Heart right ventricle (tissue), 16 donors: ENCODE measurements at regions of chr1 and their contacts with region 1.

Region 1: GRCh38 chr1:40404670-40405462 is 31.3 kb downstream of the SMAP2 start:
- DNase-seq: peak in 1 of 2 donors; percentile 27
- ATAC-seq: peak in 4 of 8 donors; percentile 38 to 63 (median 53)
- H3K4me3 ChIP-seq: no peak overlapping the region
- H3K27ac ChIP-seq: peak overlapping the region in 2 of 10 donors; percentile 37 to 55
- H3K4me1 ChIP-seq: peaks cover 0 to 49% (median 6%) of the 10 kb centered on the region in 9 donors
- H3K27me3 ChIP-seq: no peaks in the 10 kb centered on the region
- CTCF ChIP-seq: peak; percentile 68 to 95 (median 86)

Region 2: GRCh38 chr1:40079774-40080400 is 325.0 kb before region 1 on chr1:
- intact Hi-C with region 1: loop called in 3 of 10 experiments (anchors 5 kb)
- DNase-seq: no peak
- ATAC-seq: peak in 1 of 8 donors; percentile 30
- H3K4me3 ChIP-seq: no peak overlapping the region
- H3K27ac ChIP-seq: peak overlapping the region in 1 of 10 donors; percentile 69
- H3K4me1 ChIP-seq: peaks cover 0 to 79% (median 0%) of the 10 kb centered on the region in 9 donors
- H3K27me3 ChIP-seq: no peaks in the 10 kb centered on the region
- CTCF ChIP-seq: no peak

Region 3: DNA sequence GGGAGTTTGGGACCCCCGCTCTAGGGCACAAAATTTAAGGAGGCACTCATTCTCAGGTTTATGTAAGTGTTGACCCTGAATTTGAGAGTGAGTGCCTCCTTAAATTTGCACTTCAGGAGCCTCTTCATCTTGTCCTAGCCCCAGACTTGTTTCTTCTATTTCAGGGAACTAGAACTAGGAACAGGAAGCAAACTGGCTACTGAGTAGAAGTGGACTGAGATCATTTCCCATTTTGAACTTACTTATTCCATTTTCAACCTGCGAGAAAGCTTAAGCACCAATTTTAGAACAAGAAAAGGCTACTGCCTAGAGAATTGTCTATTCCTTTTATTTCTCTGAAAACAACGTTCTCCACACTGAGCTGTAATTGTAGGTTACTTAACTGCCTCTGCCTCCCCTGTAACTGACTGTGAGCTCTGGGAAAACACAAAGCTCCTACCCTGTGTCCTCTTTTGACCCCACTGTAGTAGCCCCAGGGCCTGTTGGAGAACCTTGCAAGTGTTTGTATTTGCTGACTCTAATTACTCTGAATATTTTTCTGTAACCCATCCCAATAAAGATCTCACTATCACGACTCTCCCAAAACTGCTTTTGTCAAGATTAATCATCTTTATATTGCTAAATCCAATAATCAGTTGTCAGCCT is 310.3 kb before region 1 on chr1:
- intact Hi-C with region 1: loop called in 1 of 10 experiments (anchors 5 kb)
- DNase-seq: no peak
- ATAC-seq: peak in 3 of 8 donors; percentile 16 to 17 (median 16)
- H3K4me3 ChIP-seq: no peak overlapping the region
- H3K27ac ChIP-seq: peak overlapping the region in 4 of 10 donors; percentile 20 to 66 (median 28)
- H3K4me1 ChIP-seq: peaks cover 2 to 43% (median 14%) of the 10 kb centered on the region in 9 donors
- H3K27me3 ChIP-seq: no peaks in the 10 kb centered on the region
- CTCF ChIP-seq: no peak

Region 4: GRCh38 chr1:40143891-40144575 is 260.8 kb before region 1 on chr1:
- intact Hi-C with region 1: loop called in 8 of 10 experiments (anchors 2 to 5 kb)
- DNase-seq: peak in 1 of 2 donors; percentile 57
- ATAC-seq: peak in 7 of 8 donors; percentile 58 to 81 (median 75)
- H3K4me3 ChIP-seq: no peak overlapping the region
- H3K27ac ChIP-seq: no peak overlapping the region
- H3K4me1 ChIP-seq: peaks cover 0 to 8% (median 0%) of the 10 kb centered on the region in 9 donors
- H3K27me3 ChIP-seq: peaks cover 0 to 62% (median 38%) of the 10 kb centered on the region in 7 donors
- CTCF ChIP-seq: peak; percentile 59 to 85 (median 82)

Region 5: GRCh38 chr1:40153073-40153770 is 251.6 kb before region 1 on chr1:
- intact Hi-C with region 1: loop called in 4 of 10 experiments (anchors 5 kb)
- DNase-seq: peak in 1 of 2 donors; percentile 22
- ATAC-seq: no peak
- H3K4me3 ChIP-seq: no peak overlapping the region
- H3K27ac ChIP-seq: no peak overlapping the region
- H3K4me1 ChIP-seq: peaks cover 0 to 23% (median 0%) of the 10 kb centered on the region in 9 donors
- H3K27me3 ChIP-seq: peaks cover 0 to 15% (median 8%) of the 10 kb centered on the region in 7 donors
- CTCF ChIP-seq: peak; percentile 35 to 86 (median 75)

Region 6: DNA sequence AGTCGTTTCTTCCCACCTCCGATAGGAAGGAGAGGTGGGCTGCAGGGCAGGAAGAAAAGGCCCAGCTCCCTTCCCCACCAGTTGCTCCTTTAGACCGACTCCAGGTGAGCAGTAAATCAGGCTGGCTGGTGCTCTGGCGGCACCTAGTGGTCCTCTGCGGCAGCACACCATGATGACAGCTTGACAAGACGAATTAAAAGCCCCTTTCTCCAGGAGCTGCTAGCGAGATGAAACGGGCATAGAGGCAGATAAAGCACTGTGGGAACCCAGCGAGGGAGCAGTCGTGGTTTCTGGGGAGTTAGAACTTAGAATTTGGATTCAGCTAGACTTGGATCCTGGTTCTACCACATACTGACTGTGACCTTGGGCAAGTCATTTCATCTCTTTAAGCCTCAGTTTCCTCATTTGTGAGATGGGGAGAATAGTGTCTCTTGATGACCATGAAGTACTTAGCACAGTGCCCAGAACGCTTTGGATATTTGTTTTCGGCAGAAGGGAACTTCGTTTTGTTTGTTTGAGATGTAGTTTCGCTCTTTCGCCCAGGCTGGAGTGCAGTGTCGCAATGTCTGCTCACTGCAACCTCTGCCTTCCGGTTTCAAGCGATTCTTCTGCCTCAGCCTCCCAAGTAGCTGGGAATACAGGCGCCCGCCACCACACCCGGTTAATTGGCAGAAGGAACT is 66.0 kb before region 1 on chr1:
- intact Hi-C with region 1: loop called in 8 of 10 experiments (anchors 2 to 10 kb)
- DNase-seq: peak; percentile 67 to 80
- ATAC-seq: peak; percentile 67 to 86 (median 83)
- H3K4me3 ChIP-seq: peak overlapping the region in 1 of 10 donors; percentile 37
- H3K27ac ChIP-seq: peak overlapping the region in 1 of 10 donors; percentile 84
- H3K4me1 ChIP-seq: peaks cover 0 to 52% (median 0%) of the 10 kb centered on the region in 9 donors
- H3K27me3 ChIP-seq: peaks cover 0 to 26% (median 13%) of the 10 kb centered on the region in 7 donors
- CTCF ChIP-seq: peak; percentile 93 to 99 (median 98)

Region 7: DNA sequence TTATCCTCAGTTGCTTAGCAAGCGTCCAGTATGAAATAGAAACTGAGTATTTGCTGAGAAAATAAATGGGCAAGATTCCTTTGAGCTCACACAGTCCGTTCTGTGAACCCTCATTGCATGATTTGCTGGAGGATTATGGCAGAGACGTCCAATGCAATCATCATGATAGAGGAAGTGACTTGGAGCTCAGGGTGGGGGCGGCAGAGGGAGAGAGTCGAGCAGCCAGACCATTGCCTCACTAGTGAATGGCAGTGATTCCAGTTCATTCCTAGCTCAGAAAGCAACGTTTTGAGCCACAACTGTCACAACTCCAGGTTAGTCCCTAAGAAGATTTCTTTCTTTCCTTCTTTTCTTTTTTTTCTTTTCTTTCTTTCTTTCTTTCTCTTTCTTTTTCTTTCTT is 60.3 kb before region 1 on chr1:
- intact Hi-C with region 1: loop called in 8 of 10 experiments (anchors 2 to 10 kb)
- DNase-seq: peak in 1 of 2 donors; percentile 33
- ATAC-seq: peak in 6 of 8 donors; percentile 51 to 85 (median 64)
- H3K4me3 ChIP-seq: peak overlapping the region in 1 of 10 donors; percentile 45
- H3K27ac ChIP-seq: peak overlapping the region in 1 of 10 donors; percentile 84
- H3K4me1 ChIP-seq: peaks cover 0 to 46% (median 0%) of the 10 kb centered on the region in 9 donors
- H3K27me3 ChIP-seq: peaks cover 0 to 5% (median 0%) of the 10 kb centered on the region in 7 donors
- CTCF ChIP-seq: no peak

Region 8: GRCh38 chr1:40531381-40532061 is 126.7 kb after region 1 on chr1 and contains the start of gene ZNF684:
- intact Hi-C with region 1: no loop called
- DNase-seq: peak; percentile 77 to 91
- ATAC-seq: peak; percentile 98 to 100 (median 100)
- H3K4me3 ChIP-seq: peak within 1 kb of the TSS; percentile 43 to 77 (median 70)
- H3K27ac ChIP-seq: peak within 1 kb of the TSS in 9 of 10 donors; percentile 72 to 89 (median 84)
- H3K4me1 ChIP-seq: peaks cover 0 to 23% (median 17%) of the 10 kb centered on the region in 9 donors
- H3K27me3 ChIP-seq: no peaks in the 10 kb centered on the region
- CTCF ChIP-seq: no peak
- total RNA-seq, gene ZNF684: 5.7 to 11.6 (median 8.6) TPM